PC-9 (cell line): ENCODE measurements at regions of chr12 and their contacts with region 1.

Region 1: DNA sequence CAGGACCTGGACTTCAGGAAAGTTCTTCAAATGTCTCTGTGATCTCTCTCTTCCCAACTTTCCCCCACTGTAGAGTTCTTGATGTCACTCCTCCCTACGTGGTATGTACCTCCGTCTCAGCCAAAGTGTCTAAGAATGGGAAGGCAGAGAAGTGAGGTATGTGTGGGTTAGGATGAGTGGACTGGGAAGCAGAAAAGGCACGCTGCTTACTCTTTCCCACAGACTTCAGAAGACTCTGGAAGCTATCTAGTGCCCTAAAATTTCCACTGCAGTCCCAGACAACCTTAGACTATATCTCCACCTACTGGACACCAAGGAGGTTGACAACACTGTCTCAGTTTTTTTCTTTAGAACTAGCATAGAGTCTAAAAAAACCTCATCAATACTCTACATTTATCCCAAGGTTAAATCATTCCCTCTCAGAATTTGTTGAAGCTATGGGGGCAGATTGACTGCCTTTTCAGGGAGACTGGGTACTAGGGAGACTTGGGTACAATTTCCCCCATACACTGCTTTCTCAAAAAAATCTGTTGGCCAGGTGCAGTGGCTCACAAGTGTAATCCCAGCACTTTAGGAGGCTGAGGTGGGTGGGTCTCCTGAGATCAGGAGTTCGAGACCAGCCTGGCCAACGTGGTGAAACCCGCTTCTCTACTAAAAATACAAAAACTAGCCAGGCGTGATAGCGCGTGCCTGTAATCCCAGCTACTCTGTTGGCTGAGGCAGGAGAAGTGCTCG is 20.6 kb upstream of the ITGA5 start:
- DNase-seq: peak in 1 of 2 experiments; percentile 55
- H3K4me3 ChIP-seq: no peak overlapping the region
- H3K27ac ChIP-seq: no peak overlapping the region
- H3K4me1 ChIP-seq: 0 out of 2 replicates have a peak, but pooled peaks cover 8% of the 10 kb centered on the region
- H3K27me3 ChIP-seq: no peaks in the 10 kb centered on the region
- CTCF ChIP-seq: peak; percentile 85

Region 2: GRCh38 chr12:54148560-54149429 is 290.9 kb before region 1 on chr12:
- CTCF ChIA-PET with region 1: no interaction called
- POLR2A ChIA-PET with region 1: interaction called, 11 read pairs
- intact Hi-C with region 1: no loop called
- DNase-seq: no peak
- H3K4me3 ChIP-seq: no peak overlapping the region
- H3K27ac ChIP-seq: no peak overlapping the region
- H3K4me1 ChIP-seq: no peaks in the 10 kb centered on the region
- H3K27me3 ChIP-seq: peaks cover 9% of the 10 kb centered on the region; the same call in 1 of the 2 replicates
- CTCF ChIP-seq: no peak

Region 3: GRCh38 chr12:54596526-54596946 is 156.8 kb after region 1 on chr12:
- CTCF ChIA-PET with region 1: no interaction called
- POLR2A ChIA-PET with region 1: no interaction called
- intact Hi-C with region 1: no loop called
- DNase-seq: peak in 1 of 2 experiments; percentile 37
- H3K4me3 ChIP-seq: no peak overlapping the region
- H3K27ac ChIP-seq: no peak overlapping the region
- H3K4me1 ChIP-seq: no peaks in the 10 kb centered on the region
- H3K27me3 ChIP-seq: peaks cover 72% of the 10 kb centered on the region
- CTCF ChIP-seq: peak; percentile 85